Activated CD4-positive, alpha-beta T cell treated with anti-CD3 and anti-CD28 coated beads, Interleukin-2, amount 10 ng/mL, durations not matched to agents 24 days and 14 days (primary cell): ENCODE measurements at regions of chr13 and their contacts with region 1.

Region 1: GRCh38 chr13:108269601-108270328 is at the start of gene TNFSF13B:
- DNase-seq: peak; percentile 84
- H3K4me3 Mint-ChIP-seq: peak within 1 kb of the TSS; percentile 91
- H3K27ac Mint-ChIP-seq: peak within 1 kb of the TSS; percentile 88
- H3K4me1 Mint-ChIP-seq: peaks cover 41% of the 10 kb centered on the region
- H3K27me3 Mint-ChIP-seq: no peaks in the 10 kb centered on the region
- total RNA-seq, gene TNFSF13B: 2.7 TPM in 2 replicates

Region 2: GRCh38 chr13:108218044-108218974 is 51.5 kb before region 1 on chr13 and contains the start of gene ABHD13:
- intact Hi-C with region 1: loop called (anchors 1 kb)
- DNase-seq: peak; percentile 97
- H3K4me3 Mint-ChIP-seq: peak within 1 kb of the TSS; percentile 93
- H3K27ac Mint-ChIP-seq: peak within 1 kb of the TSS; percentile 95
- H3K4me1 Mint-ChIP-seq: peaks cover 39% of the 10 kb centered on the region
- H3K27me3 Mint-ChIP-seq: peaks cover 3% of the 10 kb centered on the region
- total RNA-seq, gene ABHD13: 7.6 and 8.0 TPM in 2 replicates

Region 3: GRCh38 chr13:108227651-108228272 is 42.0 kb before region 1 on chr13:
- intact Hi-C with region 1: loop called (anchors 2 kb)
- DNase-seq: peak; percentile 84
- H3K4me3 Mint-ChIP-seq: no peak overlapping the region
- H3K27ac Mint-ChIP-seq: no peak overlapping the region
- H3K4me1 Mint-ChIP-seq: peaks cover 21% of the 10 kb centered on the region
- H3K27me3 Mint-ChIP-seq: no peaks in the 10 kb centered on the region

Region 4: DNA sequence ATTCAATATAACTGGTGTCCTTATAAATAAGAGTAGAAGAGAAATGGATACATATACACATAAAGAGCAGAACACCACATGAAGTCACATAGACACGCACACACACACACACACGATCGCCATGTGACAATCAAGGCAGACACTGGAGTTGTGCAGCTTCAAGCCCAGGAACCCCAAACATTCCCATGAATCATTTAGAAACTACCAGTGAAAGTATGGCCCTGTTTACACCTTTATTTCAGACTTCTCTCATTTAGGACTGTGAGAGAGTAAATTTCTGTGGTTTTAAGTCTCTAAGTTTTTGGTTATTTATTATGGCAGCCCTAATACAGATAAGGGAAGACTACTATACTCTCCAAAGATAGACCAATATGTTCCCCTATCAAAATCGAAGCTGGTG is 20.6 kb before region 1 on chr13:
- intact Hi-C with region 1: loop called (anchors 2 kb)
- DNase-seq: no peak
- H3K4me3 Mint-ChIP-seq: no peak overlapping the region
- H3K27ac Mint-ChIP-seq: no peak overlapping the region
- H3K4me1 Mint-ChIP-seq: peaks cover 6% of the 10 kb centered on the region
- H3K27me3 Mint-ChIP-seq: no peaks in the 10 kb centered on the region

Region 5: GRCh38 chr13:108305655-108306054 is 35.9 kb after region 1 on chr13:
- intact Hi-C with region 1: loop called (anchors 5 kb)
- DNase-seq: no peak
- H3K4me3 Mint-ChIP-seq: no peak overlapping the region
- H3K27ac Mint-ChIP-seq: peak overlapping the region; percentile 28
- H3K4me1 Mint-ChIP-seq: peaks cover 16% of the 10 kb centered on the region
- H3K27me3 Mint-ChIP-seq: no peaks in the 10 kb centered on the region

Region 6: GRCh38 chr13:108322206-108322824 is 52.5 kb after region 1 on chr13:
- intact Hi-C with region 1: loop called (anchors 5 kb)
- DNase-seq: no peak
- H3K4me3 Mint-ChIP-seq: no peak overlapping the region
- H3K27ac Mint-ChIP-seq: no peak overlapping the region
- H3K4me1 Mint-ChIP-seq: peaks cover 3% of the 10 kb centered on the region
- H3K27me3 Mint-ChIP-seq: peaks cover 34% of the 10 kb centered on the region

Region 7: GRCh38 chr13:108915634-108916512 is 646.1 kb after region 1 on chr13:
- intact Hi-C with region 1: loop called (anchors 1 kb)
- DNase-seq: peak; percentile 93
- H3K4me3 Mint-ChIP-seq: peak overlapping the region; percentile 77
- H3K27ac Mint-ChIP-seq: peak overlapping the region; percentile 93
- H3K4me1 Mint-ChIP-seq: peaks cover 29% of the 10 kb centered on the region
- H3K27me3 Mint-ChIP-seq: peaks cover 14% of the 10 kb centered on the region